ENCODE measurements at regions of chr1 and their contacts with region 1.

Region 1: DNA sequence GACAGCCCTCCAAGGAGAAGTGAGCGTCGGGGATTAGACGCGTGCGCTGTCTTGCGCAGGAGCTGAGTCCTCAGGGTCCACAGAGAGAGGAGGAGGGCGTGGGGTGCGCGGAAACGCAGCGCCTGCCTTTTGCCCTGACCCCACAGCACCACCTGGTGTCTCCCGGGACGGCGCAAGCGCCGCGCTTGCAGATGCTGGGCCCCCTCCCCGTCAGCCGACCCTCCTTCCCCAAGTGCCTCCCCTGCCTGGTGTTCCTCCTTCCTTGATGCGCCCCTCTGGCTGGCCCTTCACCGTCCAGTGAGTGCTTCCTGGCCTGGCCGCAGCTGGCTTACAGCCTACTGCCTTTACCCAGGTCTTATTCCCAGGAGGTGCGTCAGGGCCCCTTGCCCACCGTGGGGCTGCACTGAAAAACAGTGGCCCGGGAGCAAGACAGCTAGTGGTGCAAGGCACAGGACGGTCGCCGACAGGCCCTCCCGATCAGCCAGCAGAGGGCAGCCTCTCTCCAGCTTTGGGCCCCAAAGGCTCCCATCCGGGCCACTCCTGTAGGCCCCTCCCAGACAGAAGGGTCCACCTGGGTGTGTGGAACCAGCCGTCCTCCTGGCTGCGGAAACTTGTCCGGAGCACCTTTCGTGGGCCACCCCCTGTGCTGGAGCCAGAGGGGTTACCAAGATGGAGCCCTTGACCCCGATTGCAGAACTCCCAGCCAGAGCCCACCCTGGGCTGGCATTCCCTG is 12.9 kb upstream of the PHLDA3 start:
- DNase-seq: peak; percentile 85
- H3K4me3 Mint-ChIP-seq: peak overlapping the region; percentile 53
- H3K27ac Mint-ChIP-seq: no peak overlapping the region
- H3K4me1 Mint-ChIP-seq: peaks cover 17% of the 10 kb centered on the region
- H3K27me3 Mint-ChIP-seq: peaks cover 16% of the 10 kb centered on the region

Region 2: DNA sequence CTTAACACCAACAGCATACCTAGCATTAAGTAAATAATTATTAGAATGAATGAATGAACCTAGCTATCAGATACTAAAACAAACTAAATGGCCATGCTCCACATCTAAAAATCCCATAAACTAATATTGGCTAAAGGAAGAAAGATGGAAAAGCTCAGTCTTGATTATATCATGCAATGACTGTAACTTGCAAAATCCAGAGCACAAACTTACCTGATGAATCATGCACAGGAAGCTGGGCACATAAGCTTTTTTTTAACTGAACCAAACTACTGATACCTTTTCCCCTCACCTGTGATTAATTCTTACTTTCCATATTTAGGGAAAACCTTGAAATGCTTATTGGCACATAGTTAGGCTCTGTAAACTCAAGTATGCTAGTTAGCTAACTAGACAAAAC is 931.6 kb before region 1 on chr1:
- CTCF ChIA-PET with region 1: no interaction called
- intact Hi-C with region 1: no loop called
- DNase-seq: no peak
- H3K4me3 Mint-ChIP-seq: no peak overlapping the region
- H3K27ac Mint-ChIP-seq: no peak overlapping the region
- H3K4me1 Mint-ChIP-seq: peaks cover 18% of the 10 kb centered on the region
- H3K27me3 Mint-ChIP-seq: no peaks in the 10 kb centered on the region

Region 3: DNA sequence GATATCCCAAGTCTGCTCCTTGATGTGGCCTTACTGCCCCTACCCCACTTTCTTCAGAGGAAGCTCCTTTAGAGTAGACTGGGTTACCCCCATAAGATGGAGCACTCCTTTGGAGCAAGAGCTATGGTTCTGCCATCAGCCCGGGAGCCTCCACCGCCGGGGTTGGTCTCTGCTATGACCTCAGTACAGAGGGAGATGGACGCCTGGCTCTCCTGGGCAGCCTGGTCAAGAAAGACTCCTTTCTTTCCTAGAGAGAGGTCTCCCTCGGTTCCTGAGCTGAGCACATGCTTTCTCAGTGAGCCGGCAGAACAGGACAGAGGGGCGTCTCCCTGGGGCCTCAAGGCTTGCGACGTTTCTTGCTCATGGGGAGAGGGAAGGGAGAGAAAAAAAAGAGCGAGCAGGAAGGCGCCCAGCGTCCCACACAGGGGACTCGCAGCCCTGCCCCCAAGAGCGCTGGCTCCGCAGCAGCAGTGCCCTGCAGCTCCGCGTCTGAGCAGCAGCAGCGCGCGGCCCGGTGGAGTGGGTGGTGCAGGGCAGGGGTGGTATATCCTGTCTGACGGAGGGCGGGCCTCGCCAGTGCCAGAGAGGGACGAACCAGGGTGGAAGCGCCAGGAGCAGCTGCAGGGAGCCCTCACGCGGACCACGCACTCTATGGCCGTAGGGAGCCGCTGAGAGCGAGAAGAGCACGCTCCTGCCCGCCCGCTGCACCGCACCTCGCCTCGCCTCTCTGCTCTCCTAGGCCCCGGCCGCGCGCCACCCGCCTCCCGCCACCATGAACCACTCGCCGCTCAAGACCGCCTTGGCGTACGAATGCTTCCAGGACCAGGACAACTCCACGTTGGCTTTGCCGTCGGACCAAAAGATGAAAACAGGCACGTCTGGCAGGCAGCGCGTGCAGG is 198.7 kb before region 1 on chr1 and contains the start of gene PKP1:
- CTCF ChIA-PET with region 1: no interaction called
- intact Hi-C with region 1: no loop called
- DNase-seq: peak; percentile 44
- H3K4me3 Mint-ChIP-seq: peak within 1 kb of the TSS; percentile 26
- H3K27ac Mint-ChIP-seq: no peak within 1 kb of the TSS
- H3K4me1 Mint-ChIP-seq: peaks cover 8% of the 10 kb centered on the region
- H3K27me3 Mint-ChIP-seq: peaks cover 24% of the 10 kb centered on the region
- total RNA-seq, gene PKP1: not detected

Region 4: GRCh38 chr1:201309426-201309825 is 172.5 kb before region 1 on chr1:
- CTCF ChIA-PET with region 1: no interaction called
- intact Hi-C with region 1: no loop called
- DNase-seq: peak; percentile 42
- H3K4me3 Mint-ChIP-seq: no peak overlapping the region
- H3K27ac Mint-ChIP-seq: no peak overlapping the region
- H3K4me1 Mint-ChIP-seq: peaks cover 7% of the 10 kb centered on the region
- H3K27me3 Mint-ChIP-seq: peaks cover 5% of the 10 kb centered on the region

Region 5: GRCh38 chr1:201436393-201436792 is 45.5 kb before region 1 on chr1:
- CTCF ChIA-PET with region 1: interaction called, 27 read pairs
- intact Hi-C with region 1: loop called (anchors 1 kb)
- DNase-seq: no peak
- H3K4me3 Mint-ChIP-seq: no peak overlapping the region
- H3K27ac Mint-ChIP-seq: no peak overlapping the region
- H3K4me1 Mint-ChIP-seq: peaks cover 5% of the 10 kb centered on the region
- H3K27me3 Mint-ChIP-seq: peaks cover 6% of the 10 kb centered on the region

Region 6: GRCh38 chr1:201468844-201469511 is 12.9 kb before region 1 on chr1 and contains the start of gene PHLDA3:
- CTCF ChIA-PET with region 1: interaction called, 5 read pairs
- intact Hi-C with region 1: loop called (anchors 1 kb)
- DNase-seq: peak; percentile 79
- H3K4me3 Mint-ChIP-seq: peak within 1 kb of the TSS; percentile 80
- H3K27ac Mint-ChIP-seq: peak within 1 kb of the TSS; percentile 44
- H3K4me1 Mint-ChIP-seq: peaks cover 6% of the 10 kb centered on the region
- H3K27me3 Mint-ChIP-seq: peaks cover 48% of the 10 kb centered on the region
- total RNA-seq, gene PHLDA3: 19.5 TPM

Region 7: GRCh38 chr1:201500670-201501120 is 18.8 kb after region 1 on chr1:
- CTCF ChIA-PET with region 1: interaction called, 287 read pairs
- intact Hi-C with region 1: no loop called
- DNase-seq: no peak
- H3K4me3 Mint-ChIP-seq: no peak overlapping the region
- H3K27ac Mint-ChIP-seq: no peak overlapping the region
- H3K4me1 Mint-ChIP-seq: peaks cover 20% of the 10 kb centered on the region
- H3K27me3 Mint-ChIP-seq: no peaks in the 10 kb centered on the region

Region 8: GRCh38 chr1:201511941-201512539 is 30.1 kb after region 1 on chr1:
- CTCF ChIA-PET with region 1: interaction called, 287 read pairs
- intact Hi-C with region 1: loop called (anchors 1 kb)
- DNase-seq: no peak
- H3K4me3 Mint-ChIP-seq: no peak overlapping the region
- H3K27ac Mint-ChIP-seq: no peak overlapping the region
- H3K4me1 Mint-ChIP-seq: peaks cover 14% of the 10 kb centered on the region
- H3K27me3 Mint-ChIP-seq: no peaks in the 10 kb centered on the region

Region 9: DNA sequence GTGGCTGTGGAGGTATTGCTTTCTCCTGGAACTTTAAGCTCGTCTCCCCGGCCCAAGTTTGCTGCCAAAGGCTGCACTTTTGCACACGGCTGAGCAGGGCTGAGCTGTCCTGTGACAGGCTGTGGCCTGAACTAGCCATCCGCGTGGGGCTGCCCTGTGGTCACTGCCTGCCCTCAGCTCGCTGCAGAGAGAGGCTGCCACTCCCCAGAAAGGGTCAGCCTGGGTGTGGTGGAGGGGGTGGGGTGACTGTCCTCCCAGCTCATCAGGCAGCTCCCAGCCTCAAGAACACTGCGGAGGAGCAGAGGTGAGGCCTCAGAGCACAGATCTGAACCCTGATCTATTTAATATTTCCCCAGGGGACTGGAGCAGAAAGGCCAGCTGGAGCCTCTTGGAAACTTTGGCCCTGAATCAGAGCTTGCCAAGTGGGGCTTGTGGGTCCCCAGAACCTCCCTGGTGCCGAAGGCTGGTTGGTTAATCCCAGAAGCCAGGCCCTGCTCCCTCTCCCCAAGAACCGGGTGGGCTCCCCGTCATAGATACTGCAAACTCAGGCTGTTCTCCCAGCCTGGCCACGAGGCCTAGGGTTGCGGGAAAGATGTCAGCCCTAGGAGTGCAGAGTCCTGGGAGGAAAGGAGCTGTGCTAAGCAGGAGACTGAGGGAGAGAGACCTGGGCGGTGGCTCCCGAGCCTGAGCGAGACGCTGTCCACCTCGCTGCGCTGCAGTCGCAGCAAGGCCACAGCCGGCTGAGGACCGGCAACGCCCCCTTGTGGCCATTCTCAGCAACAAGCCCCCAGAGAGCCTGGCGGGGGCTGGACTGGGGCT is 221.9 kb after region 1 on chr1:
- CTCF ChIA-PET with region 1: no interaction called
- intact Hi-C with region 1: loop called (anchors 2 kb)
- DNase-seq: peak; percentile 80
- H3K4me3 Mint-ChIP-seq: no peak overlapping the region
- H3K27ac Mint-ChIP-seq: no peak overlapping the region
- H3K4me1 Mint-ChIP-seq: no peaks in the 10 kb centered on the region
- H3K27me3 Mint-ChIP-seq: no peaks in the 10 kb centered on the region

Region 10: DNA sequence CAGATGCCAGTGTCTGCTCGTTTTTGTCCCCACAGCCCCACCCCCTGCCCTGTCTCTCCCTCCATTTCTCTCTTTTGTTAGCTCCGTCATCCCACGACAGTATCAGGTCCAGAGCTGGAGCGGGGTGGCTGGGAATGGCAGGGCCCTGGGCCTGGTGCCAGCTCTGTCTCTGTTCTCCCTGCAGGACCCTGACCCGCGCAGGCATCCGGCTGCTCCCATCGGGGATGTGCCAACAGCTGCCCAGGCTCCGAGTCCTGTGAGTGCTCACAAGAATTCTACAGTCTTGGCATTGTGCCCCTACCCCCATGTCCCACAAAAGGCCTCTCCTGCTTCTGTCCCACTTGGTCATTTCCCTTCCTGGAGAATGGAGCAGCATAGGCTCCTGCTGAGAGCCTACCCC is 822.4 kb after region 1 on chr1:
- CTCF ChIA-PET with region 1: no interaction called
- intact Hi-C with region 1: no loop called
- DNase-seq: no peak
- H3K4me3 Mint-ChIP-seq: no peak overlapping the region
- H3K27ac Mint-ChIP-seq: no peak overlapping the region
- H3K4me1 Mint-ChIP-seq: no peaks in the 10 kb centered on the region
- H3K27me3 Mint-ChIP-seq: peaks cover 2% of the 10 kb centered on the region

Measured in activated naive CD4-positive, alpha-beta T cell treated with anti-CD3 and anti-CD28 coated beads for 36 hours (primary cell).